Mammary epithelial cell (primary cell): ENCODE measurements at regions of chr14 and their contacts with region 1.

Region 1: GRCh38 chr14:101849125-101849524 is 87.6 kb downstream of the PPP2R5C start:
- DNase-seq: no peak
- H3K4me3 ChIP-seq: no peak overlapping the region
- H3K27ac ChIP-seq: no peak overlapping the region
- H3K4me1 ChIP-seq: no peaks in the 10 kb centered on the region
- H3K27me3 ChIP-seq: no peaks in the 10 kb centered on the region
- CTCF ChIP-seq: no peak

Region 2: DNA sequence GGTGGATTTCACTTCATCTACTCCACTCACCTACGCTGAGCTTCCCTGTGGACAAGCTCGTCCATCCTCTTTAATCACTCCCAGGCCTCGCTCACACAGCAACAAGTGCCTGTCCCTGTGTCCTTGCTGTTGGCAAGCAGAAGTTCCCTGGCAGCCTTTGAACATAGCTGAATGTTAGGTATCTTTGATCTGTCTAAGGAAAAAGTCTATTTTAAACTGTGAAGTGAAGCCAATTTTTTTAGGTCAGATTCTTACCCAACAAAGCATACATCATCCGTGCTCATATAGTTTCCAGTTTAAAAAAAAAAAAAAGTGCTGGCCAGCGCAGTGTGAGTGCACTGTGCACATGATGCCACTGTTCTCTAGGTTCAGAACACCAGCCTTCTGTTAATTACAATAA is 51.3 kb before region 1 on chr14:
- CTCF ChIA-PET with region 1: no interaction called
- dilution Hi-C with region 1: no loop called
- in situ Hi-C with region 1: no loop called
- intact Hi-C with region 1: no loop called
- DNase-seq: no peak
- H3K4me3 ChIP-seq: no peak overlapping the region
- H3K27ac ChIP-seq: no peak overlapping the region
- H3K4me1 ChIP-seq: no peaks in the 10 kb centered on the region
- H3K27me3 ChIP-seq: no peaks in the 10 kb centered on the region
- CTCF ChIP-seq: no peak

Region 3: DNA sequence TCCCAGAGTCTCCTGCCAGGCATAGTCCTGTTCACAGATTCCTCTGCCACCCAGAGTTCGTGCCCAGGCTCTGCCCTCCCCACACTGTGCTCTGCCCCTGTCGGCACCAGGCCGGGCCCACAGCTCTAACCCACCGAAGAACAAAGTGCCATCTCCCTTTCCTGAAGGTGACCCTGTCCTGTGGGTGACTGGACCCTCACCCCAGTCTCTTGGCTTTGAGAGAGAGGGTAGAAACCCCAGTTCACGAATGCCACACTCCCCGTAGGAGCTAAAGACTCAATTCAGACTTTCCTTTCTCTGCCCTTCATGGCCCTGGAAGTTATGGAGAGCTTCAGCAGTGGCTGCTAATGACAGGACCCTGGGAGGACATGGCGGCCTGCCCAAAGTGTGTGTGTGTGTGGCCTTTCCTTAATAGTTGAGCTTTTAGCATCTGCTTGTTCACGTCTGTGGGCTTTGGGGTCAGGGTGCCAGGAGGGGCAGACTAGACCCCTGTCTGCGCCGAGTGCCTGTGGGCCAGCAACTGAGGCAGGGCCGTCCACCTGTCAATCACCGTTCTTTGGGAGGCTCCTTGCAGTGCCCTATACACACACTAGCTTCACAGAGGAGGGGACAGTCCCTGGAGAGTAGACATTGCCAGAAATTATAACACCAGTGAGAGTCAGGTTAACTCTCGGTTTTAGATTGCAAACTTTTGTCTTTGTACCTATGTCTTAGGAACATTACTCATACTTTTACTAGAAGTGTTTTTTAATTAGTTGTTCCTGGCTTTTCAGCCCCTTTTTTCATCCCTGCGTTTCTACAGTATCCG is 30.6 kb after region 1 on chr14:
- CTCF ChIA-PET with region 1: no interaction called
- dilution Hi-C with region 1: loop called (anchors 5 kb)
- in situ Hi-C with region 1: no loop called
- intact Hi-C with region 1: no loop called
- DNase-seq: no peak
- H3K4me3 ChIP-seq: no peak overlapping the region
- H3K27ac ChIP-seq: no peak overlapping the region
- H3K4me1 ChIP-seq: no peaks in the 10 kb centered on the region
- H3K27me3 ChIP-seq: no peaks in the 10 kb centered on the region
- CTCF ChIP-seq: no peak

Region 4: DNA sequence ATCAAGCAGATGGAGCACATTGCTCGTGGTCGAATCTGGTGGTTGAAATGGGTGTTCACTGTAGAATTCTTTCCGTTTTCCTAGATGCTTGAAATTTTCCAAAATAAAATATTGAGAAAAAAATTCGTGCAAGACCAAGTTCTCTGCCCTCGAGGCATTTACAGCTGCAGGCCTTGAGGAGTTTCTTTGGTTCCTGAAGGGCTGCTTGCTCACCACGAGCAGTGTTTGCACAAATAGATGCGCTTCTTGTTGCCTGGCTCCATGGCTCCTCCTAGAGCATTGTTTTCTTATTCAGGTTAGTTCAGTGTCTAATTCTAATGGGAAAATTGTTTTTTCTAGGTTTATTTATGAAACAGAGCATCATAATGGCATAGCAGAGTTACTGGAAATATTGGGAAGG is 40.8 kb after region 1 on chr14:
- CTCF ChIA-PET with region 1: no interaction called
- dilution Hi-C with region 1: no loop called
- in situ Hi-C with region 1: no loop called
- intact Hi-C with region 1: no loop called
- DNase-seq: no peak
- H3K4me3 ChIP-seq: no peak overlapping the region
- H3K27ac ChIP-seq: no peak overlapping the region
- H3K4me1 ChIP-seq: no peaks in the 10 kb centered on the region
- H3K27me3 ChIP-seq: no peaks in the 10 kb centered on the region
- CTCF ChIP-seq: no peak

Region 5: DNA sequence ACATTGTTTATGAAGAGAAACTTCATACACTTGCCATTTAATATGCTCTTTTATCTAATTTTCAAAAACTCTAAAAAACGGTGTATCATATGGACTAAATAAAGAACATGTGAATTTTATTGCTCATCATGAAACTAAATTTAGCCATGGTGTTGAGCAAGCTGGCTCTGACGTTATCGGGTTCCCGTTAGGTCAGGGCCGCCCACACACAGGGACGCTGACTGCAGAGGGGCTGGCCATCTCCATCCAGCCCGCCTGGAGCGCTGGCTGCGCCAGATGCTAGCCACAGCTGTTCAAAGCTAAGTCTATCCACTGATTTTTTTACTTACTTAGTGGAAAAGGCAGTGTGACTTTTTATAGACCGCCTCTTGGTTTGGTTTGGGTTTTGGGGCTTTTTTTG is 78.7 kb after region 1 on chr14:
- CTCF ChIA-PET with region 1: no interaction called
- dilution Hi-C with region 1: loop called (anchors 5 kb)
- in situ Hi-C with region 1: no loop called
- intact Hi-C with region 1: no loop called
- DNase-seq: peak; percentile 60
- H3K4me3 ChIP-seq: no peak overlapping the region
- H3K27ac ChIP-seq: no peak overlapping the region
- H3K4me1 ChIP-seq: no peaks in the 10 kb centered on the region
- H3K27me3 ChIP-seq: no peaks in the 10 kb centered on the region
- CTCF ChIP-seq: no peak